CD8-positive, alpha-beta memory T cell (primary cell): ENCODE measurements at regions of chr5 and their contacts with region 1.

Region 1: DNA sequence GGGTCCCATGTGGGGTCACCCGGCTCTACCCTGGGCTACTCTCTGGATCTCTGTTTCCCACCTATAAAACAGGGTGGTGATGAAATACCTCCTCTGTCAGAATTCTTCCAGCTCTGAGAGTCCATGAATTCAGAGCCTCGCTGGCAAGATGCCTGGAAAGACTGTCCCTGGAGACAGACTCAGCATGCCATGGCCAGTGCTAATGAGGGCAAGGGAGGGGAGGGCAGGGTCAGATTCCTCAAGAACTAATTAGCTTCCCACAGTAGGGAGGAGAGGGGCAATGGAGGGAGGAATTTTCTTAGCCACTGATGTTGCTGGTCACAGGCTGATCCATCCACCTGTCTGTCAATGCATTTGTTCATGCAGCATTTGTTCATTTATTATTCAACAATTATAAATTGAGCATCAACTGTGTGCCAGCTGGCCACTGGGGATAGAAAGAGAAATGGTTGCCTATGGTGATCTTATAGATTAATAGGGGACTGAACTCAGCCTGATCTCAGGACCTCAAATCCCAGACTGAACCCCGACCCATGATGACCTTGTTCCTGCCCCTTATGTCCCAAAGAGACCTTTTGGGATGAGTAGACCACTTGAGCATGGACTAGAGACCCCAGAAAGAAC is 4.7 kb downstream of the SYNPO start:
- DNase-seq: no peak
- H3K4me3 ChIP-seq: no peak overlapping the region
- H3K4me3 Mint-ChIP-seq: peak overlapping the region in 1 of 7 donors; percentile 5
- H3K27ac ChIP-seq: no peak overlapping the region
- H3K27ac Mint-ChIP-seq: no peak overlapping the region
- H3K4me1 ChIP-seq: no peaks in the 10 kb centered on the region
- H3K4me1 Mint-ChIP-seq: no peaks in the 10 kb centered on the region
- H3K27me3 ChIP-seq: no peaks in the 10 kb centered on the region
- H3K27me3 Mint-ChIP-seq: peaks cover 7 to 22% of the 10 kb centered on the region in 2 donors

Region 2: DNA sequence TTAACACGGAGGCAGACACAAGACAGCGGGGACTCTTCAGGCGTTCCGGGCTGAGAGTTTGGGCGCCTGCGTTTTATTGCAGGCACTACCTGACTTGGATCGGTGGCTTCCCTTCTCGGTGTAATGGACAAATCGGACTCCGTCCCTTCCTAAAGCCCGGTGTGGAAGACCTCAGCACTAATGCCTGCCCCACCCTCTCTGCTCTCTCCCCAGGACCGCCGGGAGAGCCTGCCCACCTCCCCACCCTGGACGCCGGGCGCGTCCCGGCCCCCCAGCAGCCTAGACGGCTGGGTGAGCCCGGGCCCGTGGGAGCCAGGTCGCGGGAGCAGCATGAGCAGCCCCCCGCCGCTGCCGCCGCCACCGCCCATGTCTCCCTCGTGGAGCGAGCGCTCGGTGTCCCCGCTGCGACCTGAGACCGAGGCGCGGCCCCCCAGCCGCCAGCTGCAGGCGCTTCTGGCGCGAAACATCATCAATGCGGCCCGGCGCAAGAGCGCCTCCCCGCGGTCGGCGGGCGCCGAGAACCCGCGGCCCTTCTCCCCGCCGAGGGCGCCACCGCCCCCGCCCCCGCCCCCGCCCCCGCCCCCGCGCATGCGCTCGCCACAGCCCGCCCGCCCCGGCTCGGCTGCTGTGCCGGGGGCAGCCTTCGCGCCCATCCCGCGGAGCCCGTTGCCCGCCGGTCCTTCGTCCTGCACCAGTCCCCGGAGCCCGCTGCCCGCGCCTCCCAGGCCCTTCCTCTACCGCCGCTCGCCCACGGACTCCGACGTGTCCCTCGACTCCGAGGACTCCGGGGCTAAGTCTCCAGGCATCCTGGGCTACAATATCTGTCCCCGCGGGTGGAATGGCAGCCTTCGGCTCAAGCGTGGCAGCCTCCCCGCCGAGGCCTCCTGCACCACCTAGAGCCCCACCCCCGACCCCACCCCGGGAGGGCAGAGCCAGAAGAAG is 11.3 kb after region 1 on chr5:
- CTCF ChIA-PET with region 1: interaction called, 12 read pairs
- POLR2A ChIA-PET with region 1: no interaction called
- DNase-seq: peak; percentile 75 to 85 (median 82)
- H3K4me3 ChIP-seq: peak overlapping the region; percentile 71
- H3K4me3 Mint-ChIP-seq: peak overlapping the region; percentile 64 to 93 (median 81)
- H3K27ac ChIP-seq: no peak overlapping the region
- H3K27ac Mint-ChIP-seq: peak overlapping the region in 5 of 8 donors; percentile 9 to 73 (median 56)
- H3K4me1 ChIP-seq: peaks cover 9% of the 10 kb centered on the region
- H3K4me1 Mint-ChIP-seq: peaks cover 5 to 11% (median 11%) of the 10 kb centered on the region in 3 donors
- H3K27me3 ChIP-seq: no peaks in the 10 kb centered on the region
- H3K27me3 Mint-ChIP-seq: peaks cover under 1 to 5% of the 10 kb centered on the region in 2 donors